ENCODE measurements at regions of chr11 and their contacts with region 1.

Region 1: DNA sequence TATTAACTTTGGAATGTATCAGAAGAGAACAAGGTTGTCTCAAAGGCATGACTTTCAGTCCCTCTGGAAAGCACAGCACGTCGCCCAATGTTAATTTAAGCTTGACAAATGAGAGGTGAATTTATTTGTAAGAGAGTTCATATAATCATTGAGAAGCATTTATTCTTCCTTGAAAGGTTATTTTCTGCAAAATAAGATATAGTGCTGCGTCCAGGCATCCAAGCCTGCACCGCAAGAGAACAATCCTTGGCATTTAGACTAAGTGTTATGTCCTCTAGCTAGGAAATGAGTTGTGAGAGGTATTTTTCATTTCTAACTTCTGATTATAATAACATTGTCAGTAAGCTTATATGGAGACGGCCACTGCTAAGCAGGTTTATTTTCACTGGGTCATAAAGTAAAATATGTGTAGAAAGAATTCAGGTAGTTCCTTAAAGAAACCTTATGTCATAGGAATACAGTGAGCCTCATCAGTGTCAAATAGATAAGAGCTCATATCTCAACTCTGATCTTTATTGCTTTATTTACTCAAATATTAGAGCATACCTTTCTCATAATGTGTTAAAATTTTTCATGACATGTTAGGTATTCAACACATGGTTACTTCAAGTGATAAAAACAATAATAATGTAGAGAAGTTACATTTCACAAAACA is 182.0 kb downstream of the LUZP2 start:
- DNase-seq: no peak
- ATAC-seq: no peak
- H3K4me3 ChIP-seq: no peak overlapping the region
- H3K27ac ChIP-seq: no peak overlapping the region
- H3K4me1 ChIP-seq: no peaks in the 10 kb centered on the region
- H3K27me3 ChIP-seq: no peaks in the 10 kb centered on the region
- CTCF ChIP-seq: no peak
- POLR2A ChIP-seq: no peak
- RAD21 ChIP-seq: no peak

Region 2: GRCh38 chr11:24625975-24626374 is 52.9 kb before region 1 on chr11:
- CTCF ChIA-PET with region 1: no interaction called
- POLR2A ChIA-PET with region 1: interaction called, 11 read pairs
- dilution Hi-C with region 1: no loop called
- in situ Hi-C with region 1: no loop called
- intact Hi-C with region 1: no loop called
- DNase-seq: no peak
- ATAC-seq: no peak
- H3K4me3 ChIP-seq: no peak overlapping the region
- H3K27ac ChIP-seq: no peak overlapping the region
- H3K4me1 ChIP-seq: peaks cover 2% of the 10 kb centered on the region
- H3K27me3 ChIP-seq: no peaks in the 10 kb centered on the region
- CTCF ChIP-seq: no peak
- POLR2A ChIP-seq: no peak
- RAD21 ChIP-seq: no peak

Measured in IMR-90 (cell line).